AG04450 (cell line): ENCODE measurements at regions of chr18 and their contacts with region 1.

Region 1: DNA sequence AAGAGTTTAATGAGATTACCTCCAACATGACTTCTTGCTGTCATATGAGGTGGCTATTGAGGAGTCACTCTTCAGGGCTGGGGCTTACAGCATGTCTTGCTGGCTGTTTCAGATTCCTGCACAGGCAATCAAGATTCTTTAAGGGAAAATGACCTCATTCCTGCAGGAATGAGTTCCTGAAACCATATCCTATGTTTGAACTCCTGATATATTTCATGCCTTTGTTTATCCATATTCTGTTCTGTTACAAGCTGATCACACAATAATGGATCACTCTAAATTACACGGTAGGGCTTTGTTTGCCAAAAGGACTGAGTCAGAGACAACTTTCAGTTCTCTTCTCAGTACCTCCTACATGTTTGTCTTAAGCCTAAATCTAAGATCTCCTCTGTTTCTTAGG is 879.8 kb upstream of the PIK3C3 start:
- DNase-seq: peak; percentile 79
- H3K4me3 ChIP-seq: no peak overlapping the region
- H3K27ac ChIP-seq: peak overlapping the region; percentile 77
- H3K27me3 ChIP-seq: no peaks in the 10 kb centered on the region
- CTCF ChIP-seq: no peak

Region 2: DNA sequence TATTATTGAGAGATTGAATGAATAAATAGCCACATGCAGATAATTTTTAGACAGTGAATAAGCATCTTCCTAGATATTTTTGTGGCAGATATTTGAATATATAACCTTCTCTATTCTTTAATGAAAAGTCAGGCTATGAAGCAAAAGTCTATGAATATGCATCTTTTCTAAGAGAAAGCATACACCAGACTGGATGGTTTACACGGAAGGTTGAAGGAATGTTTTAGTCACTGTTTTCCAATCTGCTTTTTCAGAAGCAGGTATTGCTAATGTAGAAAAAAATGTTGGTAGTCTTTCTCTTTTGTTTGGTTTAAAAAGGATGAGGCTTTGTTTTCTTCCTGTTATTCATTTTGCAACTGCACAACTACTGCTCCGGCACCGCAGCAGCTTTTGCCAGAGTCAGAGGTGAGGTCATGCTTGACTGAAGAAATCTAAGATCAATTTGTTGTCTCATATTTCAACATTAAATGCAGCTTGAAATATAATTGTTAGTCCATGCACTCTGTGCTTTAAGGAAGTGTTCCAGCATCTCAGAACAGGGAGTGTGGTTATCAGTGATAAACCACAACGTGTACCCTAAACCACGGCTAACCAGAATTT is 661.0 kb before region 1 on chr18:
- CTCF ChIA-PET with region 1: no interaction called
- POLR2A ChIA-PET with region 1: interaction called, 12 read pairs
- DNase-seq: no peak
- H3K4me3 ChIP-seq: no peak overlapping the region
- H3K27ac ChIP-seq: no peak overlapping the region
- H3K27me3 ChIP-seq: no peaks in the 10 kb centered on the region
- CTCF ChIP-seq: no peak

Region 3: DNA sequence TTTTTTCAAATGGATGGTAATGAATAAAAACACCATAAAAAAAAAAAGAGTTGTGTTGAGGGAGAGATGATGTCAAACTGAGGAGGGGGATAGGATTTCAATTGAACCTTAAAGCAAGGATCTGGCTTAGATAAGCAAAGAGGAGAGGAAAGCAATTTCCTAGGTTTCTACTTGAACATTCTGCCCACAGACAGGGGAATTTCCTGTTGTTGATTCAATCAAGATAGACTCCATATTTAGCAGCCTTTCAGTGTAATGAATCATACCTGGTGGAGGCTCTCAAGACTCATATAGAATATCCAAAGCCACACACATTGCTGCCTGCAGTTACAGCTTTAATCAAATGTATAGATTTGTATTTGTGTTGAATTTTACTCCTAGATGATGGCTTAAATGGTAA is 585.4 kb after region 1 on chr18:
- CTCF ChIA-PET with region 1: no interaction called
- POLR2A ChIA-PET with region 1: no interaction called
- DNase-seq: no peak
- H3K4me3 ChIP-seq: no peak overlapping the region
- H3K27ac ChIP-seq: no peak overlapping the region
- H3K27me3 ChIP-seq: no peaks in the 10 kb centered on the region
- CTCF ChIP-seq: no peak